IMR-90 (cell line): ENCODE measurements at regions of chr2 and their contacts with region 1.

Region 1: DNA sequence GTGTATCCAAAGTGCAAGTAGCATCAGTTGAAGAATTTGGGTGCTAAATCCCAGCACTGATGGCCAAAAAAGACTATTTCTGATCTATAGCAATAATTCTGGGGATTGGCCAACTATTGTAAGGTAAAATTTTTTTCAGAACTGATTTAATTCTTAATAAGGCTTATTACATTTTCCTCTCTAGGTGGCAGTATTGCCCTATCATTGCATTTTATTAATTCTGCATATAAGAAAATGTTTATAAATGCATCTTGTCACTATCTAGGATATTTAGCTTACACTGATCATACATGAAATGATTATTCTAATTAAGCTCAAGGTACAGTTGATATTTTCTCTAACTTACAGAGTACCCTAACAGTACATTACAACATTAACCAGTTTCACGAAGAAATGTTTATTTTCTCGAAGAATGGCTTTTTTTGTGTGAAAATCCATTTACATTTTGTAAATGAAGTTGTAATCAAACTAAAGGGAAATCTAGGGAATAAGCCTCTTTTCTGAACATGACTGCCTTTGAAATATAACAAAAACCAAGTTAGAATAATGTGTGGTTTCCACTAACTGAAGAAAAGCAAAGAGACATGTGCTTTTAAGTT is 11.0 kb downstream of the TTN start:
- DNase-seq: peak; percentile 50
- ATAC-seq: no peak
- H3K4me3 ChIP-seq: no peak overlapping the region
- H3K27ac ChIP-seq: no peak overlapping the region
- H3K4me1 ChIP-seq: no peaks in the 10 kb centered on the region
- H3K27me3 ChIP-seq: no peaks in the 10 kb centered on the region; the same call in 1 of the 2 replicates
- CTCF ChIP-seq: peak; percentile 65
- POLR2A ChIP-seq: no peak
- RAD21 ChIP-seq: peak; percentile 67

Region 2: GRCh38 chr2:178914259-178914849 is 118.2 kb after region 1 on chr2:
- CTCF ChIA-PET with region 1: no interaction called
- POLR2A ChIA-PET with region 1: no interaction called
- dilution Hi-C with region 1: no loop called
- in situ Hi-C with region 1: loop called (anchors 10 kb)
- intact Hi-C with region 1: loop called (anchors 1 kb)
- DNase-seq: peak; percentile 79
- ATAC-seq: peak; percentile 96
- H3K4me3 ChIP-seq: no peak overlapping the region
- H3K27ac ChIP-seq: no peak overlapping the region
- H3K4me1 ChIP-seq: no peaks in the 10 kb centered on the region
- H3K27me3 ChIP-seq: peaks cover 2% of the 10 kb centered on the region
- CTCF ChIP-seq: peak; percentile 75
- POLR2A ChIP-seq: no peak
- RAD21 ChIP-seq: peak; percentile 65

Region 3: GRCh38 chr2:179107737-179108136 is 311.6 kb after region 1 on chr2:
- CTCF ChIA-PET with region 1: no interaction called
- POLR2A ChIA-PET with region 1: no interaction called
- dilution Hi-C with region 1: no loop called
- in situ Hi-C with region 1: no loop called
- intact Hi-C with region 1: no loop called
- DNase-seq: peak; percentile 46
- ATAC-seq: peak; percentile 52
- H3K4me3 ChIP-seq: no peak overlapping the region
- H3K27ac ChIP-seq: no peak overlapping the region
- H3K4me1 ChIP-seq: peaks cover 8% of the 10 kb centered on the region
- H3K27me3 ChIP-seq: no peaks in the 10 kb centered on the region
- CTCF ChIP-seq: no peak
- POLR2A ChIP-seq: no peak
- RAD21 ChIP-seq: no peak

Region 4: GRCh38 chr2:179129574-179130238 is 333.5 kb after region 1 on chr2:
- CTCF ChIA-PET with region 1: interaction called, 3 read pairs
- POLR2A ChIA-PET with region 1: no interaction called
- dilution Hi-C with region 1: no loop called
- in situ Hi-C with region 1: no loop called
- intact Hi-C with region 1: loop called (anchors 5 kb)
- DNase-seq: peak; percentile 10
- ATAC-seq: peak; percentile 63
- H3K4me3 ChIP-seq: no peak overlapping the region
- H3K27ac ChIP-seq: no peak overlapping the region
- H3K4me1 ChIP-seq: peaks cover 2% of the 10 kb centered on the region; the same call in 1 of the 2 replicates
- H3K27me3 ChIP-seq: no peaks in the 10 kb centered on the region
- CTCF ChIP-seq: peak; percentile 52
- POLR2A ChIP-seq: no peak
- RAD21 ChIP-seq: peak; percentile 42

Region 5: DNA sequence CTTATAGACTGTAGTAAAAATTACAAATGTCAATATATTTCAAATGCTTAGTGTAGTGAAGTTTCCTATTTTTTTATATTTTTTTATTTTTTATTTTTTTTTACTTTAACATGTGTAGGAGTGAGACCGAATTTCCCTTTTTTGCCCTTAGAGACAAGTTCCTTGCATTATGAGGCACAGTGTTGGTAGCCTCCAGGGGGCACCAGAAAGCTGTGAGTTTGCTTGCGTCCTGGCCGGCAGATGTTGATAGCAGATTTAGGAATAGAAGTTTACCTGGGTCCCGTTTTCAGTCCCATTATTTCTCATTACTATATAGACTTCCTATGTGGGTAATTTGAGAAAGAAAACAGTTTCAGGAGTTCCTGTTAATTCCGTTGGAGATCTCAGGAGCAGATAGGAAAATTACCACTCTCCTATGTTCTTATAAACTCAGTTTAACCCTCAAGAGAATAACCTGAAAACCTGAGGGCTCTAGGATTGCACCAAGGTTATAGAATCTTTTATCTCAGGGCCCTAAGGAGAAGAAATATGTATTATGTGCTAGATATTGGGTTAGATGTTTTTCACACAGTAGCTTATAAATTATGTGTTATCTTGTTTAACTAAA is 626.0 kb after region 1 on chr2:
- CTCF ChIA-PET with region 1: no interaction called
- POLR2A ChIA-PET with region 1: no interaction called
- dilution Hi-C with region 1: no loop called
- in situ Hi-C with region 1: no loop called
- intact Hi-C with region 1: loop called (anchors 10 kb)
- DNase-seq: peak; percentile 77
- ATAC-seq: peak; percentile 89
- H3K4me3 ChIP-seq: no peak overlapping the region
- H3K27ac ChIP-seq: no peak overlapping the region
- H3K4me1 ChIP-seq: no peaks in the 10 kb centered on the region
- H3K27me3 ChIP-seq: no peaks in the 10 kb centered on the region
- CTCF ChIP-seq: peak; percentile 89
- POLR2A ChIP-seq: no peak
- RAD21 ChIP-seq: peak; percentile 93